HCT116 (cell line): ENCODE measurements at regions of chr1 and their contacts with region 1.

Region 1: DNA sequence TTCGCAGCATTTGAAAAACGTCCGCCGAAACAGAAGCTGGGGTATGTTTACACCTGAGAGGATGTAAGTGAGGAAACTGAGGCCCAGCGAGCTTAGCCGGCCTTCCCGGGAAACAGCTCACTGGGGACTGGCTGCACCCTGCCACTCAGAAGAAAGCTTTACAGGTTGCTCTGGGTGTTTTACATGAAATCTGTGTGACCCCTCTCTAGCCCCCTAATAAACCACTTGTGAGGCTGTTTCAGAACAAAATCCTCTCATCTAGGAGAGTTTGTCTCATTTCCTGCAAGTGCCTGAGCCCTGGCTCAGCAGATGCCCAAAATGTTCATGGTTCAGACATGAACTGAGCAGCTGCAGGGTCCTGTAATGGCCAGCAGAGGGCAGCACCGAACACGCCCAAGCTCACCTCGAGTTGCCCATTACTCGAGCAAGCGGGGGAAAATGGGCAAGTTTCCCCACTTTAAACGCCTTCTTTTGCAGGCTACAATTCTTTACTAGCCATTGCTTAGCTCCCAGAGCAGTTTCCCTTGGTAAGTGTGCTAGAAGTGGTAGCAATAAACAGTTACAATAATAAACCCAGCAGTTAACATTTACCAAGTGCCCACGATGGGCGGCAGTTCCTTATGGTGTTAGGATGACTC is 76.4 kb downstream of the FHAD1 start:
- DNase-seq: peak; percentile 65
- ATAC-seq: peak; percentile 93
- H3K4me3 ChIP-seq: no peak overlapping the region; a peak in 1 of 4 replicates
- H3K27ac ChIP-seq: peak overlapping the region; percentile 35
- H3K4me1 ChIP-seq: peaks cover 4 to 33% of the 10 kb centered on the region in 2 experiments
- H3K27me3 ChIP-seq: no peaks in the 10 kb centered on the region
- CTCF ChIP-seq: peak; percentile 85 to 99 (median 97)
- POLR2A ChIP-seq: no peak
- RAD21 ChIP-seq: peak; percentile 97

Region 2: DNA sequence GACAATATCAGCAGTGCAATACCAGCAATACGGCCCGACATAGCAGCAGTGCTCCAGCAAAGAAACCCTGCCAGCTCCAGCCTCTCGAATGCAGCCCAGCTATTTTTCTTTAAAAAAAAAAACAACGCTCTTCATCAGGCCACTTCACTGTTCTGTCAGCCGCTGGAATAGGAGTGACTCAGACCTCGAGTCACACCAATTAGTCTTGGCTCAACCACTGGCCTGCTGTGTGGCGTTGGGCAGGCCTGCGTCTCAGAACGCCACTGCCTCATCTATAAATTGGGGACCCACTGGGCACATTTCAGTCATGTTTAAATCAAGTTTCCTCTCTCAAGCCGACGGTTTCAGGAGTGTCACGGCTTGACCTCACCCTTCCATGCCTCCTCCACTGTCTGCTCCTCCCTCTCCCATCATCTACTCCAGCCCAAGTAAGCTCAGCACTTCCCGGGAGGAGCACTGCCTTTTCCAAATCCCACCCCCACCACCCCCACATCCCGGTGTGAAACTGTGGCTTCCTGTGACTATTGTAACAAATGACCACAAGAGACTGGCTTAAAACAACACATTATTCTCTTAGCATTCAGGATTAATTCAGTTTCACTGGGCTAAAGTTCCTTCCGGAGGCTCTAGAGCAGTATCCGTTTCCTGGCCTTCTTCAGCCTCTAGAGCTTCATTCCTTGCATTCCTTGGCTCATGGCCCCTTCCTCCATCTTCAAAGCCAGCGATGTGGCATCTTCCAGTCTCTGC is 14.4 kb after region 1 on chr1:
- CTCF ChIA-PET with region 1: interaction called, 22 read pairs
- POLR2A ChIA-PET with region 1: no interaction called
- RAD21 ChIA-PET with region 1: no interaction called
- intact Hi-C with region 1: no loop called
- DNase-seq: peak; percentile 70
- ATAC-seq: peak; percentile 88
- H3K4me3 ChIP-seq: peak overlapping the region in 1 of 2 experiments; percentile 38; a peak in 2 of 4 replicates
- H3K27ac ChIP-seq: peak overlapping the region; percentile 21; the same call in 1 of the 2 replicates
- H3K4me1 ChIP-seq: peaks cover 18 to 52% of the 10 kb centered on the region in 2 experiments
- H3K27me3 ChIP-seq: no peaks in the 10 kb centered on the region
- CTCF ChIP-seq: no peak
- POLR2A ChIP-seq: no peak
- RAD21 ChIP-seq: 0 out of 2 replicates have a peak, but pooled peaks have one; percentile 19

Region 3: GRCh38 chr1:15364740-15365139 is 41.3 kb after region 1 on chr1:
- CTCF ChIA-PET with region 1: interaction called, 3 read pairs
- POLR2A ChIA-PET with region 1: no interaction called
- RAD21 ChIA-PET with region 1: no interaction called
- intact Hi-C with region 1: loop called (anchors 2 kb)
- DNase-seq: no peak
- ATAC-seq: peak; percentile 85
- H3K4me3 ChIP-seq: no peak overlapping the region
- H3K27ac ChIP-seq: no peak overlapping the region
- H3K4me1 ChIP-seq: peaks cover 11 to 38% of the 10 kb centered on the region in 2 experiments
- H3K27me3 ChIP-seq: no peaks in the 10 kb centered on the region
- CTCF ChIP-seq: peak; percentile 35 to 44 (median 43); a peak in 5 of 6 replicates
- POLR2A ChIP-seq: no peak
- RAD21 ChIP-seq: peak; percentile 66

Region 4: GRCh38 chr1:15417365-15417934 is 94.0 kb after region 1 on chr1:
- CTCF ChIA-PET with region 1: interaction called, 4 read pairs
- POLR2A ChIA-PET with region 1: no interaction called
- RAD21 ChIA-PET with region 1: no interaction called
- intact Hi-C with region 1: loop called (anchors 5 kb)
- DNase-seq: no peak
- ATAC-seq: peak; percentile 3; the same call in 1 of the 2 replicates
- H3K4me3 ChIP-seq: no peak overlapping the region
- H3K27ac ChIP-seq: no peak overlapping the region
- H3K4me1 ChIP-seq: peaks cover 12 to 74% of the 10 kb centered on the region in 2 experiments
- H3K27me3 ChIP-seq: no peaks in the 10 kb centered on the region
- CTCF ChIP-seq: no peak
- POLR2A ChIP-seq: no peak
- RAD21 ChIP-seq: no peak

Region 5: DNA sequence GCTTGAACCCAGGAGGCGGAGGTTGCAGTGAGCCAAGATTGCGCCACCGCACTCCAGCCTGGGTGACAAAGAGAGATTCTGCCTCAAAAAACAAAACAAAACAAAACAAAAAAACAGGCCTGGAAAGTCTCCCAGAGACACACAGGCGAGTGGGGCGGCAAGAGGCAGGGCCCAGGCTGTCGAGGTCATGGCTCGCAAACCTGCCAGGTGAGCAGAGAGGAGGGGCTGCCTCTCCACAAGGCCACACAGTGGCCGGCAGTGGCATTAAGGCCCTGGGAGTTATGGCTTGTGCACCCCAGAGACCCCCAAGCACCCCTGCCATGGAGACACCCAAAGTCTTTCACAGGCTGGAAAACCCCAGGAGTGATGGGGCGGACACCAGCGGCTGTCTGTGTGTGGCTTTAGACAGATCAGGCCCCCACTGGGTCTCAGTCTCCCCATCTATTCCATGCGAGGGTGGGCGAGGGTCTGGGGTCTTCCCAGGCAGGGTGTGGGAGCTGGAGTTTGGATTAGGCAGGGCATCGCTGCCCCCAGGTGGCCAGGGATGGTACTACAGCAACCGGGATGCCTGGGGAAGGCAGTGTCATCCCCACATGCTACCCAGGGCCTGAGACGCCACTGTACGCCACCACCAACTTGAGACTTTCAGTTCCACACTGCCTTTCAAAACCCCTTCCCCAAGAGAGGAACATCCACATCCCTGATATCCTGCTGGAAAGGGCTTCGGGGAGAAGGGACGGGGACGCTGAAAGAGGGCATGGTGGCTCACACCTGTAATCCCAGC is 107.5 kb after region 1 on chr1:
- CTCF ChIA-PET with region 1: interaction called, 48 read pairs
- POLR2A ChIA-PET with region 1: no interaction called
- RAD21 ChIA-PET with region 1: interaction called, 15 to 22 read pairs
- intact Hi-C with region 1: loop called (anchors 1 kb)
- DNase-seq: no peak
- ATAC-seq: peak; percentile 66
- H3K4me3 ChIP-seq: no peak overlapping the region
- H3K27ac ChIP-seq: no peak overlapping the region
- H3K4me1 ChIP-seq: peaks cover 7 to 48% of the 10 kb centered on the region in 2 experiments; a peak in 3 of 4 replicates
- H3K27me3 ChIP-seq: no peaks in the 10 kb centered on the region
- CTCF ChIP-seq: peak; percentile 82 to 94 (median 92)
- POLR2A ChIP-seq: no peak
- RAD21 ChIP-seq: peak; percentile 95

Region 6: GRCh38 chr1:15501208-15502032 is 177.9 kb after region 1 on chr1:
- CTCF ChIA-PET with region 1: interaction called, 4 read pairs
- POLR2A ChIA-PET with region 1: no interaction called
- RAD21 ChIA-PET with region 1: no interaction called
- intact Hi-C with region 1: loop called (anchors 1 kb)
- DNase-seq: peak; percentile 16
- ATAC-seq: peak; percentile 98
- H3K4me3 ChIP-seq: no peak overlapping the region
- H3K27ac ChIP-seq: no peak overlapping the region
- H3K4me1 ChIP-seq: no peaks in the 10 kb centered on the region
- H3K27me3 ChIP-seq: no peaks in the 10 kb centered on the region
- CTCF ChIP-seq: peak; percentile 60 to 94 (median 80); a peak in 5 of 6 replicates
- POLR2A ChIP-seq: no peak
- RAD21 ChIP-seq: peak; percentile 73